ENCODE measurements at regions of chr9 and their contacts with region 1.

Region 1: DNA sequence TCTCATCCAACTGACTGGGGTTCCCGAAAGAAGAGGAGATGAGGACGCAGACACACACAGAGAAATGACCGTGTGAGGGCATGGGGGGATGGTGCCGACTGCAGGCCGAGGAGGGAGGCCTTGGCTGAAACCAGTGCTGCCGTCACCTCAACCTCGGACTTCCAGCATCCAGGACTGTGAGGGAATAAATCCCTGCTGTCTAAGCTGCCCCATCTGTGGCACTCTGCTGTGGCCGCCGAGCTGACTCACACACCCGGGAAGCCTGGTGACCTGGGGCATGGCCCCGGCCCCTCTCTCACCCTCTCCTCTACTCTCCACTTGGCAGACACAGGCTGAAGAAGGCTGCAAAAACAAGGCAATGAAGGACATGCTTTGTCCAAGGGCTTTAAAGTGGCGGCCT is 4.4 kb upstream of the COL5A1 start:
- DNase-seq: no peak
- H3K4me3 ChIP-seq: no peak overlapping the region
- H3K27ac ChIP-seq: no peak overlapping the region
- H3K4me1 ChIP-seq: peaks cover under 1 to 4% of the 10 kb centered on the region in 2 donors
- H3K27me3 ChIP-seq: no peaks in the 10 kb centered on the region
- CTCF ChIP-seq: no peak
- POLR2A ChIP-seq: no peak

Region 2: DNA sequence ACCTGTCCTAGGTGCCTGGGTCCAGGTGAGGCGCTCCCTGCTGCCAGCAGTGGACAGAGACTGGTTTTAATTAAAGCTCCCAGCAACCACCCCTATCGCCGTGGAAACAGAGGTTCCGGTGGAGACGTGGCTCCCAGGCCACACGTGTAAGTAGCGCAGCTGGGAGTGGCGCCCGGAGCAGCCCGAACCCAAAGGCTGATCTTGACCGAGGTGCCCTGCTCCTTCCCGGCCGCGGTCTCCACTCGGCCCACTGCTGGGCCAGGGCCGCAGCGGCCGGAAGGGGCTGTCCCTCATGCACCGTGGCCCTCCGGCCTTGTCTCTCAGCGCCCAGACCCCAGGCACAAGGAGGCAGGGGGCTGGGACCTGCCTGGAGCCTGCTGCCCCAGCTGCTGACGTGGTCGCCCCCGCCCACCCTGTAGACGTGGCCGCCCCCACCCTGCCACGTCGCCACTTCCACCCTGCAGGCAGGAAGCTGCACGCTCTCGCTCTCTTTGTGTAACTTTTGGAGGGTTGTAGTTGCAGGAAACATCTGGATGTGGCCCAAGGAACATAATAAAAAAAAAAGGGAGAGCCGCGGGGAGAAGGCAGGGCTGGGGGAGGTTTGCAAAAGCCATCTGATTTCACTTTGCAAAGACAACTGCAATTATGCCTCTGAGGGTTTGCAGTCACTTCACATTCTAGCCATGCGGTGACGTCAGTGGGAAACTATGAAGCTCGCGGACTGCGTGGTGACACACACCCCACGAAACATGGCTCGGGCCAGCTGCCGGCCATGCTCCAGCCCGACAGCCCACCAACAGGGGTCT is 181.1 kb before region 1 on chr9:
- intact Hi-C with region 1: loop called (anchors 10 kb)
- DNase-seq: peak; percentile 67 to 75
- H3K4me3 ChIP-seq: no peak overlapping the region
- H3K27ac ChIP-seq: peak overlapping the region; percentile 83 to 88 (median 88)
- H3K4me1 ChIP-seq: peaks cover 18 to 30% of the 10 kb centered on the region in 2 donors
- H3K27me3 ChIP-seq: no peaks in the 10 kb centered on the region
- CTCF ChIP-seq: no peak
- POLR2A ChIP-seq: peak in 1 of 2 donors; percentile 22

Region 3: DNA sequence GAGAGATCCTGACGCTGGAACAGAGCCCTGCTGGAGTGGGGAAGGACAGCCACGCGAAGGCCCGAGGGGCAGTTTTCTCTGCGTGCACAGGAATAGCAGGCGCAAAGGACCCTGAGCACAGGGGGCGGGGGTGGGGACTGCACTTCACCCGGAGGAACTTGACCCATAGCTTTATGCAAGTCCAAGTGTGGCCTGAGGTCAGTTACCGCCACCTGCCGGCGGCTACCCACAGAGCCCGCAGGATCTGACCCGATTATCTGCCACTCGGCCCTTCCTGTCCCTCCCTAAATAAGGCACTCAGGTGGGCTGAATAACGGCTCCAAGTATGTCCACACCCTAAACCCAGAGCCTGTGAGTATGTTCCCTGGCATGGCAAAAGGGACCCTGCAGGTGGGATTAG is 345.8 kb after region 1 on chr9:
- intact Hi-C with region 1: no loop called
- DNase-seq: no peak
- H3K4me3 ChIP-seq: no peak overlapping the region
- H3K27ac ChIP-seq: no peak overlapping the region
- H3K4me1 ChIP-seq: peaks cover 0 to 6% of the 10 kb centered on the region in 2 donors
- H3K27me3 ChIP-seq: no peaks in the 10 kb centered on the region
- CTCF ChIP-seq: peak in 3 of 6 experiments; percentile 5 to 23 (median 14)
- POLR2A ChIP-seq: no peak

Measured in thyroid gland (tissue), 4 donors.